ENCODE measurements at regions of chr22 and their contacts with region 1.

Region 1: DNA sequence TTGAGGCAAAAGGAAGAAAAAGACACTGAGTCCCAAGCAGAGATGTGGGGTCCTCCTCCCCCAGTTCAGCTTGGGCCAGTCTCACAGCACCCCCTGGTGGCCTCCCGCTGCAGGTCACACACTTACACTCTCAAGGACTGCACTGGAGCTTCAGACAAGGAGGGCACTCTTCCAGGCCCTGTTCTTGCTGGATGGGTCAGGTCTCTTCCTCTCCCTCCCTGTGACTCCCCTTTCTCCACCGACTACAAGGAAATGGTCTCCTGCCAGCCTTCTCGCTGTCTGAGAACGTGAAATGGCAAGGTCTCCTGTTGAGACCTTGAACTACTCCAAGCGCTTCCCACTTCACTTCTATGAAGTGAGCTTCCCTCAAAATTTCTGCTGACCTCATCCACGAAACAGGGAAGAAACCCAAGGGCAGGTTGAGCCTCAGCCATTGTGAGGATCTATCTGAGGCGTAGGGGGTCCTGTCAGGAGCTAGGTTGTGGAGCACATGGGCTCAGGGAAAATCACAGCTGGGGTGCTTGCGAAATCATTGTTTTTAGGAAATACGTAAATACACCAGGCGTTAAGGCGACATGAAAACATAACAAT is 11.2 kb upstream of the IGLL1 start:
- DNase-seq: peak; percentile 74
- ATAC-seq: peak; percentile 84
- H3K4me3 Mint-ChIP-seq: no peak overlapping the region
- H3K27ac Mint-ChIP-seq: no peak overlapping the region
- H3K4me1 Mint-ChIP-seq: peaks cover 22% of the 10 kb centered on the region
- H3K27me3 Mint-ChIP-seq: peaks cover 2% of the 10 kb centered on the region

Region 2: GRCh38 chr22:23565288-23565941 is 25.9 kb before region 1 on chr22:
- CTCF ChIA-PET with region 1: no interaction called
- DNase-seq: no peak
- ATAC-seq: peak; percentile 27
- H3K4me3 Mint-ChIP-seq: peak overlapping the region; percentile 37
- H3K27ac Mint-ChIP-seq: no peak overlapping the region
- H3K4me1 Mint-ChIP-seq: peaks cover 6% of the 10 kb centered on the region
- H3K27me3 Mint-ChIP-seq: peaks cover 46% of the 10 kb centered on the region

Region 3: GRCh38 chr22:23580576-23581259 is 10.6 kb before region 1 on chr22:
- CTCF ChIA-PET with region 1: interaction called, 25 read pairs
- DNase-seq: peak; percentile 73
- ATAC-seq: peak; percentile 68
- H3K4me3 Mint-ChIP-seq: peak overlapping the region; percentile 31
- H3K27ac Mint-ChIP-seq: peak overlapping the region; percentile 77
- H3K4me1 Mint-ChIP-seq: peaks cover 42% of the 10 kb centered on the region
- H3K27me3 Mint-ChIP-seq: peaks cover 40% of the 10 kb centered on the region

Region 4: DNA sequence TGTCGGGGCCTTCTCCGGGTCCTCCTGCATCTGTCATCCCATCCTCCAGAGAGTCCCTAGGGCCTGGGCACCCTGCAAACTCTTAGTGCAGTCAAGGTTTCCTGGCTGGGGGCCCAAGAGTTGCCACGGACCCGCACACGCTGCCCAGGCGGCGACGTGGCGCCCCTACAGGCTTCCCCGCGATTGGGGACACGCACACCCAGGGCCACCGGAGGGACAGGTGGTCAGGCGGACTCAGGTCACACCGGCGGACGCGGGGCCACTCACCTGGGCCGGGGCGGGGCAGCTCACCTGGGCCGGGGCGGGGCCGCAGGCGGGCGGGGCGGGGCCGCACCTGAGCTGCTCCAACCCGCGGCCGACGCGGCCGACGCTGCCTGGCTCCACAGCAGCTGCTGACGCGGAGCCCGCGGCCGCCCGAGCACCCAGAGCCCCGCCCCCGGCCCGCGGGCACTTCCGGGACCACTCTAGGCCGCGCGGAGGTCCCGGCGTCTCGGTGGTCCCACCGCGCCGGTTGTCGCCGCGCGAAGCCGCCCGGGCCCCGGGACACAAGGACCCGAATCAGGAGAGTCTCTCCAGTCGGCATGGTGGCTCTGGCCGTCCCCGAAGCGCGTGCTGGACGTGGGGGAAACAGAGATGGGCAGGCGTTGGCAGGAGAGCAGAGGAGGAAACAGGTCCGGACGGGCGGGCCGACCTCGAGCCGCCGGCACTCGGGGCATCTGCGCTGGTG is 159.6 kb after region 1 on chr22 and contains the start of gene ZNF70:
- CTCF ChIA-PET with region 1: no interaction called
- DNase-seq: peak; percentile 89
- ATAC-seq: peak; percentile 99
- H3K4me3 Mint-ChIP-seq: peak within 1 kb of the TSS; percentile 78
- H3K27ac Mint-ChIP-seq: peak within 1 kb of the TSS; percentile 84
- H3K4me1 Mint-ChIP-seq: peaks cover 19% of the 10 kb centered on the region
- H3K27me3 Mint-ChIP-seq: no peaks in the 10 kb centered on the region
- total RNA-seq, gene ZNF70: 2.9 to 3.0 TPM

Measured in activated CD8-positive, alpha-beta memory T cell treated with anti-CD3 and anti-CD28 coated beads, Interleukin-2, amount 10 ng/mL, durations not matched to agents 7 days and 5 days (primary cell).